ENCODE measurements at regions of chr12 and their contacts with region 1.

Region 1: GRCh38 chr12:76031537-76032073 is at the start of gene PHLDA1:
- DNase-seq: peak; percentile 68 to 94 (median 85)
- ATAC-seq: peak; percentile 80 to 88 (median 80)
- H3K4me3 ChIP-seq: peak within 1 kb of the TSS; percentile 84 to 95
- H3K4me3 Mint-ChIP-seq: peak within 1 kb of the TSS; percentile 88 to 95 (median 88)
- H3K27ac ChIP-seq: peak within 1 kb of the TSS; percentile 95
- H3K27ac Mint-ChIP-seq: peak within 1 kb of the TSS; percentile 87 to 88
- H3K4me1 ChIP-seq: peaks cover 3 to 23% of the 10 kb centered on the region in 2 experiments
- H3K4me1 Mint-ChIP-seq: peaks cover 27 to 34% (median 32%) of the 10 kb centered on the region in 3 donors
- H3K27me3 ChIP-seq: peaks cover 0 to 3% of the 10 kb centered on the region in 2 experiments
- H3K27me3 Mint-ChIP-seq: no peaks in the 10 kb centered on the region
- total RNA-seq, gene PHLDA1: 5.4 to 11.7 (median 7.1) TPM

Region 2: GRCh38 chr12:76020731-76021672 is 10.6 kb before region 1 on chr12:
- CTCF ChIA-PET with region 1: interaction called, 3 to 31 read pairs
- POLR2A ChIA-PET with region 1: interaction called, 4 to 43 read pairs
- DNase-seq: peak in 34 of 35 experiments; percentile 24 to 84 (median 56)
- ATAC-seq: peak; percentile 84 to 87 (median 84)
- H3K4me3 ChIP-seq: peak overlapping the region in 1 of 2 donors; percentile 11
- H3K4me3 Mint-ChIP-seq: peak overlapping the region; percentile 63 to 73 (median 71)
- H3K27ac ChIP-seq: peak overlapping the region; percentile 97
- H3K27ac Mint-ChIP-seq: peak overlapping the region; percentile 98
- H3K4me1 ChIP-seq: peaks cover 4 to 23% of the 10 kb centered on the region in 2 experiments
- H3K4me1 Mint-ChIP-seq: peaks cover 19 to 56% (median 50%) of the 10 kb centered on the region in 3 donors
- H3K27me3 ChIP-seq: no peaks in the 10 kb centered on the region
- H3K27me3 Mint-ChIP-seq: no peaks in the 10 kb centered on the region

Region 3: DNA sequence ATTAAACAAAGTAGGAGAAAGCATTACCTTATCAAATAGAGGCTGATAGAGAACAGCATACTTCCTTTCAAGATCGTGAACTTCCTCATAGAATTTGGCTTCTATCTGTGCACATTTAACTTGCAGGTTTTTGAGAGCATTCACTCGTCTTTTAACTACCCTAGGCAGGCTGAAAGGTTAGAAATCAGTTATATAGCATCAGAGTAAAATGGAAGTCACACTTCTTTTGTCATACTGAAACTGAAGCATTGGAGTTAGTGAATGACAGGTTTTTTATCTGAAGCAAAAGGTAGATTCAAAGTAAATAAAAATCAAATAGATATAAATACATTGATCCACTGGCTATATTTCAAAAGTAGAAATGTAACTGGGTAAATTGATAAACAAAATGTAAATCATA is 28.5 kb after region 1 on chr12:
- CTCF ChIA-PET with region 1: no interaction called
- POLR2A ChIA-PET with region 1: no interaction called
- DNase-seq: no peak
- ATAC-seq: no peak
- H3K4me3 ChIP-seq: no peak overlapping the region
- H3K4me3 Mint-ChIP-seq: no peak overlapping the region
- H3K27ac ChIP-seq: no peak overlapping the region
- H3K27ac Mint-ChIP-seq: peak overlapping the region; percentile 9 to 17
- H3K4me1 ChIP-seq: no peaks in the 10 kb centered on the region
- H3K4me1 Mint-ChIP-seq: peaks cover 15 to 22% (median 20%) of the 10 kb centered on the region in 3 donors
- H3K27me3 ChIP-seq: no peaks in the 10 kb centered on the region
- H3K27me3 Mint-ChIP-seq: no peaks in the 10 kb centered on the region

Region 4: GRCh38 chr12:76080729-76081415 is 49.3 kb after region 1 on chr12:
- CTCF ChIA-PET with region 1: interaction called, 3 read pairs
- POLR2A ChIA-PET with region 1: interaction called in 1 of 2 experiments, 11 read pairs
- DNase-seq: peak in 6 of 35 experiments; percentile 3 to 36 (median 9)
- ATAC-seq: no peak
- H3K4me3 ChIP-seq: no peak overlapping the region
- H3K4me3 Mint-ChIP-seq: peak overlapping the region in 1 of 3 donors; percentile 13
- H3K27ac ChIP-seq: no peak overlapping the region
- H3K27ac Mint-ChIP-seq: no peak overlapping the region
- H3K4me1 ChIP-seq: peaks cover 17 to 21% of the 10 kb centered on the region in 2 experiments
- H3K4me1 Mint-ChIP-seq: peaks cover 78 to 85% (median 78%) of the 10 kb centered on the region in 3 donors
- H3K27me3 ChIP-seq: no peaks in the 10 kb centered on the region
- H3K27me3 Mint-ChIP-seq: no peaks in the 10 kb centered on the region

Region 5: GRCh38 chr12:76117067-76117695 is 85.6 kb after region 1 on chr12:
- CTCF ChIA-PET with region 1: no interaction called
- POLR2A ChIA-PET with region 1: no interaction called
- DNase-seq: no peak
- ATAC-seq: no peak
- H3K4me3 ChIP-seq: no peak overlapping the region
- H3K4me3 Mint-ChIP-seq: no peak overlapping the region
- H3K27ac ChIP-seq: no peak overlapping the region
- H3K27ac Mint-ChIP-seq: no peak overlapping the region
- H3K4me1 ChIP-seq: no peaks in the 10 kb centered on the region
- H3K4me1 Mint-ChIP-seq: no peaks in the 10 kb centered on the region
- H3K27me3 ChIP-seq: no peaks in the 10 kb centered on the region
- H3K27me3 Mint-ChIP-seq: no peaks in the 10 kb centered on the region

Region 6: GRCh38 chr12:77010691-77011548 is 979.3 kb after region 1 on chr12:
- CTCF ChIA-PET with region 1: no interaction called
- POLR2A ChIA-PET with region 1: no interaction called
- DNase-seq: peak in 33 of 35 experiments; percentile 20 to 70 (median 46)
- ATAC-seq: peak; percentile 65 to 79 (median 74)
- H3K4me3 ChIP-seq: no peak overlapping the region
- H3K4me3 Mint-ChIP-seq: peak overlapping the region in 1 of 3 donors; percentile 47
- H3K27ac ChIP-seq: no peak overlapping the region
- H3K27ac Mint-ChIP-seq: no peak overlapping the region
- H3K4me1 ChIP-seq: no peaks in the 10 kb centered on the region
- H3K4me1 Mint-ChIP-seq: peaks cover 6 to 7% (median 6%) of the 10 kb centered on the region in 3 donors
- H3K27me3 ChIP-seq: peaks cover 0 to 3% of the 10 kb centered on the region in 2 experiments
- H3K27me3 Mint-ChIP-seq: peaks cover 10 to 12% of the 10 kb centered on the region in 2 donors

Measured in T-cell (primary cell).